HEK293T (cell line): ENCODE measurements at regions of chr5 and their contacts with region 1.

Region 1: DNA sequence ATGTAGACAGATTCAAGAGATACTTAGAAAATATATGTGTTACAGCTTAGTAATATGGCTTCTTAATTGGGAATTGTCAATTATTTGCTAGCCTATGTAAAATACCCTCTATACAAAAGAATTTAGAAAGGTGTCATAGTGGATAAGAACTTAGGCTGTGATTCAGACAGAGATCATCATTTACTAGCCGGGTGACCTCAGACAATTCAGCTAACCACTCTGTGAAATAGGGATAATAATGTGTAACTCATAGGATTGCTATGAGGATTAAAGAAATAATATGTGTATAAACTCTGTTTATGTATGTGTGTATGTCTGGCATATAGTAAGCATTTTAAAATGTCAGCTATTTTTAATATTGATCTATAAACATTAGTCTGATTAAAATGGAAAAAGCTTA is 5.9 kb upstream of the LARS1 start:
- DNase-seq: no peak

Region 2: GRCh38 chr5:146158257-146158656 is 30.1 kb before region 1 on chr5:
- CTCF ChIA-PET with region 1: no interaction called
- POLR2A ChIA-PET with region 1: no interaction called
- DNase-seq: no peak

Region 3: DNA sequence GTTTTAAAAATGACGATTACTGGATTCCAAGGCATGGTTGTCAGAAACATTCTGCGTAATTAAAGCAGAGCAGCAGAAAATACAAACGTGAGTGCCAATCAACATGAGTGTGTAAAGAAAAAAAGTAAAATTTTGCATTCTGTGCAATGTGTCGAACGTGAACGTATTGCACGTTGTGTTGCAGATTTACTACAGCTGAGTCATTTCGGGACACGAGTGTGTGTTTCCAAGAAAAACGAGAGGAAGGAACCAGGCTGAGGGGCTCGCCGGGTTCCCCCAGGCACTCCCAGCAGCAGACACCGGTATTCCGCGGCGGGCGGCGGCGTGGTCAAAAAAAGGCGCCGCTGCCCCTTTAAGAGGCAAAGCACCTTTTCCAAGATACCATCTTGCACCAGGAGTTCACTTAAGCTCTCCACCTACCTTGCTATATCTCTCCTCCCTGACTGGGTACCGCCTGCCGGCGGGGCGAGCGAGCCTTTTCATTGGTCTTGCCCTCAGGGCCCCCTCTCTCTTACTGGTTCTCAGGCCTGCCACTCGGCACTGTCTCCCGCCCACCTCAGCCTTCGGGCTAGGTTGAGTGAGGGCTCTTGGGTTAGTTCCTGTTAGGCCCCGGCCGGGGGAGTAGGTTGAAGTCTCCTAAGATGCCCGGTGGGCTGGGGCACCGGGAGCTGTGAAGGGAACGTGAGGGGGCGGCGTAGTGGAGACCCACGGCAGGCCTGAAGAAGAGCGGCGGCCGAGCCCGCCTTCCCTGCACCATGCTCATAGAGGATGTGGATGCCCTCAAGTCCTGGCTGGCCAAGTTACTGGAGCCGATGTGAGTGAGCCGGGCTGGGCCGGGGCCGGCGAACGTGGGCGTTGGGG is 14.9 kb after region 1 on chr5 and contains the start of gene RBM27:
- CTCF ChIA-PET with region 1: no interaction called
- POLR2A ChIA-PET with region 1: interaction called, 36 read pairs
- DNase-seq: peak; percentile 98